CD8-positive, alpha-beta T cell (primary cell): ENCODE measurements at regions of chr1 and their contacts with region 1.

Region 1: GRCh38 chr1:9110669-9111356 is 18.1 kb downstream of the GPR157 start:
- DNase-seq: peak; percentile 72 to 89 (median 84)
- ATAC-seq: peak; percentile 89
- H3K4me3 ChIP-seq: no peak overlapping the region
- H3K4me3 Mint-ChIP-seq: no peak overlapping the region
- H3K27ac ChIP-seq: no peak overlapping the region
- H3K27ac Mint-ChIP-seq: no peak overlapping the region
- H3K4me1 ChIP-seq: no peaks in the 10 kb centered on the region
- H3K4me1 Mint-ChIP-seq: no peaks in the 10 kb centered on the region
- H3K27me3 ChIP-seq: no peaks in the 10 kb centered on the region
- H3K27me3 Mint-ChIP-seq: no peaks in the 10 kb centered on the region
- CTCF ChIP-seq: peak; percentile 84

Region 2: GRCh38 chr1:9128520-9129265 is 17.9 kb after region 1 on chr1 and contains the start of gene GPR157:
- CTCF ChIA-PET with region 1: interaction called, 5 read pairs
- POLR2A ChIA-PET with region 1: no interaction called
- intact Hi-C with region 1: loop called in 1 of 2 experiments (anchors 1 kb)
- DNase-seq: peak; percentile 56 to 88 (median 81)
- ATAC-seq: peak; percentile 84
- H3K4me3 ChIP-seq: peak within 1 kb of the TSS; percentile 61 to 68
- H3K4me3 Mint-ChIP-seq: peak within 1 kb of the TSS; percentile 90
- H3K27ac ChIP-seq: peak within 1 kb of the TSS; percentile 37 to 50
- H3K27ac Mint-ChIP-seq: peak within 1 kb of the TSS; percentile 75
- H3K4me1 ChIP-seq: peaks cover 33% of the 10 kb centered on the region
- H3K4me1 Mint-ChIP-seq: peaks cover 35% of the 10 kb centered on the region
- H3K27me3 ChIP-seq: no peaks in the 10 kb centered on the region
- H3K27me3 Mint-ChIP-seq: no peaks in the 10 kb centered on the region
- CTCF ChIP-seq: no peak
- total RNA-seq, gene GPR157: 1.9 to 2.9 TPM

Region 3: DNA sequence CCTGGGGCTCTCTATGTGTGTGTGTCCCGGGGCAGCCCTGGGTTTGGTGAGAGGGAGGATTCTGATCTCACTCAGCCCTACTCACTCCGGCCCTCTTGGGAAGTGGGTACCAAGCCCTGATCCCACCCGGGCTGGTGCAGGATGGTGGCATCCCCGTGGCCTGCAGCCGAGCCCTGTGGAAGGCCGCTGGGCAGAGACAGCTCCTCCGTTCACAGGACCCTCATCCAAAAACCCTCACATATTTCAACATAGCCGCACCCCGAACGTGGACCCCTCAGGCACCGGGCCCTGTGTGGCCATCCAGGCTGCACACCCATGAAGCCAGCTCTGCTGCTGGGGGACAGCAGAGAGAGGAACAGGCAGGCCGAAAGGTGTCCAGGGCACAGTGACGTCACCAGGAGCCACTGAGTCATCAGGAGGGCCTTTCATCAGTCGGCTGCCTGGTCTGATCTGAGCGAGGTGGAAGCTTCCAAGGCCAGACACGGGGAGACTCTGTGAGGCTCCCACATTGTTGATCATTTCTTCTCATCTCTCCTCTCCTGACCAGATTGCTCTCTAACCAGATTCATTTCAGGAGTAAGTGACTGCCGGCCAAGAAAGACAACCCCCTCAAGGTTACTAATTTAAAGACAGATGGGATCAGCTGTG is 34.3 kb after region 1 on chr1:
- CTCF ChIA-PET with region 1: interaction called, 12 read pairs
- POLR2A ChIA-PET with region 1: no interaction called
- intact Hi-C with region 1: no loop called
- DNase-seq: no peak
- ATAC-seq: no peak
- H3K4me3 ChIP-seq: no peak overlapping the region
- H3K4me3 Mint-ChIP-seq: no peak overlapping the region
- H3K27ac ChIP-seq: no peak overlapping the region
- H3K27ac Mint-ChIP-seq: no peak overlapping the region
- H3K4me1 ChIP-seq: no peaks in the 10 kb centered on the region
- H3K4me1 Mint-ChIP-seq: peaks cover 3% of the 10 kb centered on the region
- H3K27me3 ChIP-seq: no peaks in the 10 kb centered on the region
- H3K27me3 Mint-ChIP-seq: no peaks in the 10 kb centered on the region
- CTCF ChIP-seq: no peak

Region 4: DNA sequence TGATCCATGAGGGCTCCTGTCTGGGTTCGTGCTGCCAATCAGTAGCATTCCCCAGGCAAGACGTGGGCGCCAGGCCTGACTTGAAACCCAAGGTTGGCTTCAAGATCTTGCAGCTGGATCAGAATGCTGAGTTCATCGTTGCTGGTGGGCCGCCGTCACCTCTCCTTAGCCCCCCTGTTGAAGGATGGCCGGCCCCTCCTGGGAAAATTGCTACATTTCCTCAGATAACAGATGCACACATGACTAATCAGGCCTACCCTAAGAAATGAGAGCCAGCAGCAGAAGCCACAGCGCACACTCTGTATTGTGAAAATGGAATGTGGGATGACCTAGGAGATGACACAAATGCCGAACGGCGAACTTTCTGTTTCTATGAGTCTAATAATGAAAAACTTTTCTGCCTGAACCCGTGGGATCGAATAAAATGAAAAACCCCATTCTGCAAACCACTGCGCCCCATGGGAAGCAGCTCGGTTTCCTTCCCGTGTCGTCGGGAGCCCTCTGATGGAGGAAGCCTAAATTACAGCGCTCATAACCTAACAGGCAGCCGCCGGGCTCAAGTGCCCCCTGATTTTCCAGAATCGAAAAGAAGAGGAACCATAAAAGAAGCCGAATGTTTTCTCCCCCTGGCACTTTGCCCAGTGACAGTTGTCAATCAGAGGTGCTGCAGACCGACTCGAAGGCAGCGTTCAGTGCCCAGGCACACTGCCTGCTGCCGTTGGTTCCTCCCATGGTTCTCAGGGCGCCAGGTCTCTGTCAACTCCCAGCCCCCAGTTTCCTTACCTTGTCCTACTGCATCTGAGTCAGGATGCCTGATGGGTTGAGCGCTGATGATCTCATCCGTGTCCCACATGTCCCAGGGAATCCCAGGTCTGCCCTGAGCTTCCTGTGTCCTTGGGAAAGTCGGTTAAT is 85.6 kb after region 1 on chr1:
- CTCF ChIA-PET with region 1: interaction called, 68 read pairs
- POLR2A ChIA-PET with region 1: no interaction called
- intact Hi-C with region 1: loop called in 1 of 2 experiments (anchors 1 kb)
- DNase-seq: peak; percentile 34 to 71 (median 59)
- ATAC-seq: peak; percentile 64
- H3K4me3 ChIP-seq: no peak overlapping the region
- H3K4me3 Mint-ChIP-seq: no peak overlapping the region
- H3K27ac ChIP-seq: no peak overlapping the region
- H3K27ac Mint-ChIP-seq: no peak overlapping the region
- H3K4me1 ChIP-seq: peaks cover 4% of the 10 kb centered on the region
- H3K4me1 Mint-ChIP-seq: peaks cover 15% of the 10 kb centered on the region
- H3K27me3 ChIP-seq: peaks cover 10 to 30% of the 10 kb centered on the region in 2 experiments
- H3K27me3 Mint-ChIP-seq: peaks cover 54% of the 10 kb centered on the region
- CTCF ChIP-seq: peak; percentile 72

Region 5: GRCh38 chr1:9201401-9202239 is 90.8 kb after region 1 on chr1:
- CTCF ChIA-PET with region 1: interaction called, 68 read pairs
- POLR2A ChIA-PET with region 1: no interaction called
- intact Hi-C with region 1: loop called in 1 of 2 experiments (anchors 1 kb)
- DNase-seq: peak in 1 of 9 experiments; percentile 37
- ATAC-seq: peak; percentile 34
- H3K4me3 ChIP-seq: peak overlapping the region in 1 of 2 experiments; percentile 21
- H3K4me3 Mint-ChIP-seq: peak overlapping the region; percentile 56
- H3K27ac ChIP-seq: no peak overlapping the region
- H3K27ac Mint-ChIP-seq: no peak overlapping the region
- H3K4me1 ChIP-seq: peaks cover 31% of the 10 kb centered on the region
- H3K4me1 Mint-ChIP-seq: peaks cover 36% of the 10 kb centered on the region
- H3K27me3 ChIP-seq: peaks cover 19 to 36% of the 10 kb centered on the region in 2 experiments
- H3K27me3 Mint-ChIP-seq: peaks cover 78% of the 10 kb centered on the region
- CTCF ChIP-seq: no peak